ENCODE measurements at regions of chr20 and their contacts with region 1.

Region 1: DNA sequence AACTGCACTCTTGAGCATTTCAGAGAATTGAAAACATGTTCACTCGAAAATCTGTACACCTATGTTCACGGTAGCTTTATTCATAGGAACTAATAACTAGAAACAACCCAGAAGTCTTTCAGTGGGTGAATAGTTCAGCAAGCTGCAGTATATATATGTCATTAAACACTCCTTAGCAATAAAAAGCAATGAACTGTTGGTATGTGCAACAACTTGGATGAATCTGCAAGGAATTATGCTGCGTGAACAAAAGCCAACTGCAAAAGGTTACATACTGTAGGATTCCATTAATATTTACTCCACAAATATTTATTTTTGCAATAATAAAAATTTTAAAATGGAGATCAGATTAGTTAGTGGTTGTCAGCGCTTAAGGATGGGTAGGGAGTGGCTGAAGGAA is 22.1 kb upstream of the FKBP1A start:
- DNase-seq: no peak
- H3K4me3 Mint-ChIP-seq: no peak overlapping the region
- H3K27ac Mint-ChIP-seq: no peak overlapping the region
- H3K4me1 Mint-ChIP-seq: no peaks in the 10 kb centered on the region
- H3K27me3 Mint-ChIP-seq: no peaks in the 10 kb centered on the region

Region 2: DNA sequence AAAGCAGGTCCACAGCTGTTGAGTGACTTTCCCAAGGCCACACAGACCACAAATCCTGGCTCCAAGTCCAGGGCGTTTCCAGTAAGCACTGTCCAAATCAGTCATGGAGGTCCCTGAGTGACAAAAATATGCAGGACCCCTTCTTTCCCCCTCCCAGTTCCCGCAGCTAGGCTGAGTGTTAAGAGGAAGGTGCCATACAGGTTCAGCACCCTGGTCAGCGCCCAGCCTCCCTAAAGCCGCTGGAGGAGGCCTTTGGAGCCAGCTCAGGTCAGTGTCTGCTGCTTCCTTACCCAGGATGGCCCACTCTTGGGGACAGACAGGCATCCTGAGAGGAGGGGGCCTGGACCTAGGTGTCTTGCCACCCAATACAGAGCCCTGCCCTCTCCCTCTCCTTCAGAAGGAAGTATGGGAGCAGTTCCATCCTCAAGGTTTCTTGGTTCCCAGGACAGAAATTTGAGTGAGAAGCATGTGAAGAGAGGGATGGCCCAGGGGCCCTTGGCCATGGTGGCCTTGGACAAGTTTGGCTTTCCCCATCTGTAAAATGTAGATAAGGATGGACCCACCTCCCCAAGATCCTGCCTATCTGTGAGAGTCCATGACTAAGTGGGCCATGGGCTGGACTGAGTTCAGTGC is 243.4 kb before region 1 on chr20:
- CTCF ChIA-PET with region 1: no interaction called
- intact Hi-C with region 1: no loop called
- DNase-seq: peak; percentile 16
- H3K4me3 Mint-ChIP-seq: no peak overlapping the region
- H3K27ac Mint-ChIP-seq: no peak overlapping the region
- H3K4me1 Mint-ChIP-seq: no peaks in the 10 kb centered on the region
- H3K27me3 Mint-ChIP-seq: no peaks in the 10 kb centered on the region

Region 3: DNA sequence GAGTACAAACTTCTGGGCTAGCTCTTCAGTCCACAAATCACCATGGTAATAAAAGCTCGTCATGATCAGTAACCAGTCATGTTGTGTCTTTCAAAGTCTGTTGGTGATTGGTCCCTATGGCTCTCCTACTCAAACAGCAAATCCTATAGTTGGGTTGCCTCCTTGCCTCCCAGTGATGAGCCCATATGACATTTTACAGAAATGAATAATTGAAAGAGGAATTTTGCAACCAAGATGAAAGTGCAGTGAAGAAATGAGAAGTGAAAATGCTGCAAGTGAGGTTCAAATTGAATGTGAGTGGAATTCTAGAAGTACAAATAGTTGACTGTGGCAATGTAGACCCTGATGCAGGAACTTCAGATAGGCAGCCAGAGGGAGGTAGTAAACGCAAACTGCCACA is 147.6 kb after region 1 on chr20:
- CTCF ChIA-PET with region 1: no interaction called
- intact Hi-C with region 1: loop called (anchors 5 kb)
- DNase-seq: no peak
- H3K4me3 Mint-ChIP-seq: no peak overlapping the region
- H3K27ac Mint-ChIP-seq: no peak overlapping the region
- H3K4me1 Mint-ChIP-seq: peaks cover 13% of the 10 kb centered on the region
- H3K27me3 Mint-ChIP-seq: no peaks in the 10 kb centered on the region